Lower leg skin (tissue), 4 donors: ENCODE measurements at regions of chr2 and their contacts with region 1.

Region 1: GRCh38 chr2:160719116-160719515 is 225.5 kb upstream of the RBMS1 start:
- DNase-seq: no peak
- H3K4me3 ChIP-seq: no peak overlapping the region
- CTCF ChIP-seq: no peak
- POLR2A ChIP-seq: no peak

Region 2: DNA sequence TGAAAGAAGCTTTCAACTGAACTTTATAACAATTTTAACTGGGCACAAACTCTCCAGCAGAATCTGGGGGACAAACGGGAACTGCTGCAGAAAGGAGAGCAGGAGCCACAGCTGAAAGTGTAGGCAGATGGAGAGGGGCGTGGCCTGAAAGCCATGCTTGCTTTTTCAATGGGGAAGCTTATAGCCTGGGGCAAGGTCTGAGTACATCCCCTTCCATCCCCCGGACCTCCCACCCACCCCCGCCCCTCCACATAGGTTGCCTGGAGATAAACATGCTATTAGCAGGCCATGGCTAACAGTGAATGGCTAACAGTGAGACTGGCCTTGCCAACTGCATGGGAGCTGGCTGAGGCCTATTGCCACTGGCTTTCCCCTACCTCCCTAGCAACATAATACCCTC is 123.2 kb after region 1 on chr2:
- intact Hi-C with region 1: loop called (anchors 5 kb)
- DNase-seq: no peak
- H3K4me3 ChIP-seq: no peak overlapping the region
- CTCF ChIP-seq: no peak
- POLR2A ChIP-seq: no peak